ENCODE measurements at regions of chr1 and their contacts with region 1.

Region 1: GRCh38 chr1:93629099-93630059 is 52.3 kb downstream of the BCAR3 start:
- DNase-seq: no peak
- ATAC-seq: peak; percentile 83
- H3K4me3 Mint-ChIP-seq: no peak overlapping the region
- H3K27ac Mint-ChIP-seq: no peak overlapping the region
- H3K4me1 Mint-ChIP-seq: peaks cover 9% of the 10 kb centered on the region
- H3K27me3 Mint-ChIP-seq: no peaks in the 10 kb centered on the region
- CTCF ChIP-seq: peak; percentile 74

Region 2: GRCh38 chr1:93304716-93305138 is 324.7 kb before region 1 on chr1:
- CTCF ChIA-PET with region 1: interaction called, 12 read pairs
- POLR2A ChIA-PET with region 1: no interaction called
- intact Hi-C with region 1: loop called (anchors 1 kb)
- DNase-seq: no peak
- ATAC-seq: peak; percentile 71
- H3K4me3 Mint-ChIP-seq: no peak overlapping the region
- H3K27ac Mint-ChIP-seq: no peak overlapping the region
- H3K4me1 Mint-ChIP-seq: no peaks in the 10 kb centered on the region
- H3K27me3 Mint-ChIP-seq: no peaks in the 10 kb centered on the region
- CTCF ChIP-seq: peak; percentile 87

Region 3: DNA sequence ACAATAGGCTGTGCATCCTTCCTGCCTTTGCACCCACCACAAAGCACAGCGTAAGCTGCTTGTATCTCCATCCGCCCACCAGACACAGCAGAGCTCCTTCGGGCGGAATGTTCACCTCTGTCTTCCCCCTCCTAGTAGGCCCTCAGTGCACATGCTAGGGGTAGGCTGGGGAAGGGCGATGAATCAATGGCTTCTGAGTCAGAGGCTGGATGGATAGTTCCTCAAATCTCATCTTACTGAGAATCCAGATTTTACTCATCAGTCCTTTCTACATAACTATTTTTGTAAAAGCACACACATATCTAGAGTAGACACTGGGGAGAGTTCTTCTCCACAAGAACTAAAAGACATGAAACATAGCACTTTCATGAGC is 21.6 kb before region 1 on chr1:
- CTCF ChIA-PET with region 1: interaction called, 10 read pairs
- POLR2A ChIA-PET with region 1: no interaction called
- intact Hi-C with region 1: loop called (anchors 2 kb)
- DNase-seq: no peak
- ATAC-seq: peak; percentile 91
- H3K4me3 Mint-ChIP-seq: peak overlapping the region; percentile 62
- H3K27ac Mint-ChIP-seq: peak overlapping the region; percentile 87
- H3K4me1 Mint-ChIP-seq: peaks cover 69% of the 10 kb centered on the region
- H3K27me3 Mint-ChIP-seq: no peaks in the 10 kb centered on the region
- CTCF ChIP-seq: no peak

Region 4: GRCh38 chr1:93708734-93709481 is 79.5 kb after region 1 on chr1:
- CTCF ChIA-PET with region 1: interaction called, 5 read pairs
- POLR2A ChIA-PET with region 1: no interaction called
- intact Hi-C with region 1: loop called (anchors 2 kb)
- DNase-seq: no peak
- ATAC-seq: no peak
- H3K4me3 Mint-ChIP-seq: peak overlapping the region; percentile 72
- H3K27ac Mint-ChIP-seq: peak overlapping the region; percentile 90
- H3K4me1 Mint-ChIP-seq: peaks cover 68% of the 10 kb centered on the region
- H3K27me3 Mint-ChIP-seq: no peaks in the 10 kb centered on the region
- CTCF ChIP-seq: no peak

Region 5: DNA sequence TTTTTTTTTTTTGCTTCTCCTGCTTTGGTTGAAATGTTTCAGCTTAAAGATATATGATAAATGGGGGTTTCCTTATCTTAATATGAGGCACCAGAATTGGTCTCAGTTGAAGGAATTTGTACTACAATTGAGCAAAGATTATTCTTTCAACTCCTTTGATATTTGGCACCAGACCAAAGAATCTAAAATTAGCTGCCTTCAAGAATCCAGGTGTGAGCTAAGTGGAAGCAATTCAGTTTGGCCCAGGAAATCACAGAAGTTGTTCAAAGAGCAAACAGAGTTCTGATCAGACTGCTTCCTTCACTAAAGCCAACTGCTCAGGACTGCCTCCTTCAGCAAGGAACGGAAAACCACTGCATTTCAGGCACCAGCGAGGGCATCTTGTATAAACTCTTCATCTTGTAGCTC is 120.5 kb after region 1 on chr1:
- CTCF ChIA-PET with region 1: interaction called, 38 read pairs
- POLR2A ChIA-PET with region 1: interaction called, 7 read pairs
- intact Hi-C with region 1: loop called (anchors 1 kb)
- DNase-seq: no peak
- ATAC-seq: peak; percentile 62
- H3K4me3 Mint-ChIP-seq: peak overlapping the region; percentile 76
- H3K27ac Mint-ChIP-seq: peak overlapping the region; percentile 94
- H3K4me1 Mint-ChIP-seq: peaks cover 60% of the 10 kb centered on the region
- H3K27me3 Mint-ChIP-seq: no peaks in the 10 kb centered on the region
- CTCF ChIP-seq: no peak

Region 6: DNA sequence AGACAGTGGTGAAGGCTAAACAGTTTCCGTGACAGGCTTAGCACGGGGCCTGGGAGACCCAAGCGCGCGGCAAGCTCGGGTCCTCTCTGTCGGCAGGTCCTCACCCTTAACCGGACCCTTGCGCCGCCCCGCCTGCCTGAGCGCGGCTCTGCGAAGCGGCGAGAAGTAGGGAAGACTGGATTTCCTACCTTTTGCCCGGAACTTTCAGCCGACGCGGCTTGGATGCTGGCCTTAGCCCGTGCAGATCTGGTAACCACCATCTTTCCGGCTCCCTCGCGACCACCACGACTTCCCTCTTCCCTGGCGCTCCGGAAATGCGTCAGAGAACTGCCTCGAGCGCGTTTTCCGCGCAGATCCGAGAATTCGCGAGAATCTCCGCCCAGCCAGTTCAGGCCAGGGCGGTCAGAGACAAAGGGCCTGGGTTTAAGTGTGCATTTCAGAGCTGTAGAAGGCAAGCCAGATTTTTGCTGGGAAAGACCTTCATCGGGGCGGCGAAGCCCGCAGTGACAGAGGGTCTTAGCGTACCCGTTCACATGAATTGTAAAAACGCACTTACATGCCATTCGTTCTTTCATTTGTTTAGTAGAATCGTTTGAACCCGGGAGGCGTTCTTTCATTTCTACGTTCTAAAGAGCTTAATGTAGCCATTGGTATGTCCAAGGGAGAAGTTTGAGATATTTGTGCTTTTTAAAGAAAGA is 249.7 kb after region 1 on chr1 and contains the start of gene DNTTIP2:
- CTCF ChIA-PET with region 1: no interaction called
- POLR2A ChIA-PET with region 1: no interaction called
- intact Hi-C with region 1: loop called (anchors 1 kb)
- DNase-seq: peak; percentile 77
- ATAC-seq: peak; percentile 91
- H3K4me3 Mint-ChIP-seq: peak within 1 kb of the TSS; percentile 96
- H3K27ac Mint-ChIP-seq: peak within 1 kb of the TSS; percentile 97
- H3K4me1 Mint-ChIP-seq: peaks cover 48% of the 10 kb centered on the region
- H3K27me3 Mint-ChIP-seq: no peaks in the 10 kb centered on the region
- CTCF ChIP-seq: no peak
- total RNA-seq, gene DNTTIP2: 65.6 and 69.7 TPM in 2 replicates

Region 7: DNA sequence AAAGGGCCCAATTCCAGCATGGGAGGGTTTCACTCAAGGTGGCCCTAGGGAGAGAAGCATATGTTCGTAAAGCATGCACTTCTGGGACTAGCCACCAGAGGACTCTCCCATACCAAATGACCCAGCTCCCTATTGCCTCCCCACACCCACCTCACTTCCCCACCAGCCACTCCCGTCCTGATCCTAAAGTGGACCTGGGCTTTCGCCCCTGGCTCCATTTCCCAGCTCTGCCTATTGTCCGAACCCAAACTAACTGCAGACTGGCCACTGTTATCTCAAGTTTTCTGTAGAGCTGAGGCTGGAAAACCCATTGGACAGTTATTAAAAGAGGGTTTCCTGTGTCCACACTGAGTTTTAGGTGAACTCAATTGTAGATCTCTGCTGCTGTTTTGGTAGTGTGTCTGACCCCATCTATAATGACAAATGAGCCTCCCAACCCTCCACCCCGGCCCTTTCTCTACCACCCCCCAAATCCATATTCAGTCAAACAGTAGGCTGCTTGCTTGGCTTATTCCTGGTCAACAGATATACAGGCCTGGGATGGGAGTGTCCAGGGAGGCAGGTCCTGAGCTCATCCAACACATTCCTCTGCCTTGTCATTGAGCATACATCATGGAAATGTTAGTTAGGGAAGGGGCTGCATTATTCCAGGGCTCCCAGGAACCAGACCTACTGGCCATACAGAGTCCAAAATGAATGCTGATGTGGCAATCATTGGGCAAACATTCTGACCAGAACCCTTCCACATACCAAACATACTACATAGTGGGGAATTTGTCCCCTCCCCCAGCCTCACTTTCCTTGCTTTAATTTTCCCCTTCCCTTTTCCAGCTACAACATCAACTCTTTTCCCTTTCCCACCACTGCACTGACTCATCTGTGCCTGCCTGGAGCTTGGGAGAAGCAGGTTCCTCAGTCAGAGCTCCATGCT is 432.4 kb after region 1 on chr1:
- CTCF ChIA-PET with region 1: no interaction called
- POLR2A ChIA-PET with region 1: no interaction called
- intact Hi-C with region 1: no loop called
- DNase-seq: no peak
- ATAC-seq: peak; percentile 47
- H3K4me3 Mint-ChIP-seq: no peak overlapping the region
- H3K27ac Mint-ChIP-seq: no peak overlapping the region
- H3K4me1 Mint-ChIP-seq: no peaks in the 10 kb centered on the region
- H3K27me3 Mint-ChIP-seq: peaks cover 9% of the 10 kb centered on the region
- CTCF ChIP-seq: no peak